ENCODE measurements at regions of chr5 and their contacts with region 1.

Region 1: DNA sequence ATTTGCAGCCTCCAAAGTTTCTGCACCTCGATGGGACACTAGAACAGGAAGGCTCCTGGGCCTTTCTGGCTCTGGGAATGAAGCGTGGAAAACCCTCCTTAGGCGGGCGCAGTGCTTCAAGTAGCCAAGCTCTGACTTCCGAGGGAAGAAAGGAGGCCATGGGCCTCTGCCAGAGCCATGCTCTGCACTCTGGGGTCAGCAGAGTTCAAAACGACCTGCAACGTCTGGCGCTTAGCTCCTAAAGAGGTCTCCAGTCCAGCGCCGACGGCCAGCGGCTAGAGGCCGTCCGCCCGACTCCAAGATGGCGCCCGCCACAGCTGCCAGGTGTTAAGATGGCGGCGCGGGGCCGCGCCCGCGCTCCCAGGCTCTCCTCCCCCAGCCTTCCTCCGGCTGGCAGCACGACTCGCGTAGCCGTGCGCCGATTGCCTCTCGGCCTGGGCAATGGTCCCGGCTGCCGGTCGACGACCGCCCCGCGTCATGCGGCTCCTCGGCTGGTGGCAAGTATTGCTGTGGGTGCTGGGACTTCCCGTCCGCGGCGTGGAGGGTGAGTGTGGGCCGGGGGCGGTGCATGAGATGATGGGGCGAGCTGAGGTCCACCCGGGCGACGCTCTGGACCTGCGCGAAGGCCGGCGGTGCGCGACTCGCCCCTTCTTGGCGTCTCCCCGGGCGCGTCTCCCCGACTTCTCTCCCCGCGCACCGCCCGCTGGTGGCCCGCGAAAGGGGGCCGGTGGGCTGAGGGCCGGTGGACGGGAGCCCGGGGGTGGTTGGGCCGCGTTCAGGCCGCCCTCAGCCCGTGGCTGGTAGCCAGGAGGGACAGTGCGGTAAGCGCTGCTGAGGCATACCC is at the start of gene TXNDC15:
- H3K4me3 Mint-ChIP-seq: peak within 1 kb of the TSS; percentile 97
- H3K27ac Mint-ChIP-seq: peak within 1 kb of the TSS; percentile 97
- H3K4me1 Mint-ChIP-seq: peaks cover 35% of the 10 kb centered on the region
- H3K27me3 Mint-ChIP-seq: no peaks in the 10 kb centered on the region

Region 2: DNA sequence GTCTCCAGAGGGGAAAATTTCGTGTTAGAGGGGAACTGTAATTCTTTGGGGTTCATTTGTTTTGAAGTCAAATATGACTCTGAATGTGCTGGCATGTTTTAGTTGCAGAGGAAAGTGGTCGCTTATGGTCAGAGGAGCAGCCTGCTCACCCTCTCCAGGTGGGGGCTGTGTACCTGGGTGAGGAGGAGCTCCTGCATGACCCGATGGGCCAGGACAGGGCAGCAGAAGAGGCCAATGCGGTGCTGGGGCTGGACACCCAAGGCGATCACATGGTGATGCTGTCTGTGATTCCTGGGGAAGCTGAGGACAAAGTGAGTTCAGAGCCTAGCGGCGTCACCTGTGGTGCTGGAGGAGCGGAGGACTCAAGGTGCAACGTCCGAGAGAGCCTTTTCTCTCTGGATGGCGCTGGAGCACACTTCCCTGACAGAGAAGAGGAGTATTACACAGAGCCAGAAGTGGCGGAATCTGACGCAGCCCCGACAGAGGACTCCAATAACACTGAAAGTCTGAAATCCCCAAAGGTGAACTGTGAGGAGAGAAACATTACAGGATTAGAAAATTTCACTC is 13.5 kb after region 1 on chr5:
- intact Hi-C with region 1: no loop called
- H3K4me3 Mint-ChIP-seq: no peak overlapping the region
- H3K27ac Mint-ChIP-seq: no peak overlapping the region
- H3K4me1 Mint-ChIP-seq: no peaks in the 10 kb centered on the region
- H3K27me3 Mint-ChIP-seq: no peaks in the 10 kb centered on the region

Region 3: GRCh38 chr5:134904630-134905245 is 30.5 kb after region 1 on chr5 and contains the start of gene PCBD2:
- intact Hi-C with region 1: loop called (anchors 2 kb)
- H3K4me3 Mint-ChIP-seq: peak within 1 kb of the TSS; percentile 86
- H3K27ac Mint-ChIP-seq: peak within 1 kb of the TSS; percentile 93
- H3K4me1 Mint-ChIP-seq: peaks cover 14% of the 10 kb centered on the region
- H3K27me3 Mint-ChIP-seq: no peaks in the 10 kb centered on the region